ENCODE measurements at regions of chr1 and their contacts with region 1.

Region 1: GRCh38 chr1:1291548-1292441 is 11.6 kb downstream of the SCNN1D start:
- DNase-seq: peak; percentile 84
- ATAC-seq: peak; percentile 87
- H3K4me3 Mint-ChIP-seq: no peak overlapping the region
- H3K27ac Mint-ChIP-seq: no peak overlapping the region
- H3K4me1 Mint-ChIP-seq: peaks cover 2% of the 10 kb centered on the region
- H3K27me3 Mint-ChIP-seq: no peaks in the 10 kb centered on the region
- CTCF ChIP-seq: peak; percentile 69

Region 2: GRCh38 chr1:1115786-1116700 is 175.8 kb before region 1 on chr1 and contains the start of gene C1orf159:
- CTCF ChIA-PET with region 1: interaction called, 25 read pairs
- POLR2A ChIA-PET with region 1: interaction called, 3 read pairs
- intact Hi-C with region 1: no loop called
- DNase-seq: peak; percentile 99
- ATAC-seq: peak; percentile 94
- H3K4me3 Mint-ChIP-seq: peak within 1 kb of the TSS; percentile 76
- H3K27ac Mint-ChIP-seq: peak within 1 kb of the TSS; percentile 86
- H3K4me1 Mint-ChIP-seq: peaks cover 22% of the 10 kb centered on the region
- H3K27me3 Mint-ChIP-seq: peaks cover 7% of the 10 kb centered on the region
- CTCF ChIP-seq: no peak
- total RNA-seq, gene C1orf159: 17.5 to 20.3 TPM

Region 3: DNA sequence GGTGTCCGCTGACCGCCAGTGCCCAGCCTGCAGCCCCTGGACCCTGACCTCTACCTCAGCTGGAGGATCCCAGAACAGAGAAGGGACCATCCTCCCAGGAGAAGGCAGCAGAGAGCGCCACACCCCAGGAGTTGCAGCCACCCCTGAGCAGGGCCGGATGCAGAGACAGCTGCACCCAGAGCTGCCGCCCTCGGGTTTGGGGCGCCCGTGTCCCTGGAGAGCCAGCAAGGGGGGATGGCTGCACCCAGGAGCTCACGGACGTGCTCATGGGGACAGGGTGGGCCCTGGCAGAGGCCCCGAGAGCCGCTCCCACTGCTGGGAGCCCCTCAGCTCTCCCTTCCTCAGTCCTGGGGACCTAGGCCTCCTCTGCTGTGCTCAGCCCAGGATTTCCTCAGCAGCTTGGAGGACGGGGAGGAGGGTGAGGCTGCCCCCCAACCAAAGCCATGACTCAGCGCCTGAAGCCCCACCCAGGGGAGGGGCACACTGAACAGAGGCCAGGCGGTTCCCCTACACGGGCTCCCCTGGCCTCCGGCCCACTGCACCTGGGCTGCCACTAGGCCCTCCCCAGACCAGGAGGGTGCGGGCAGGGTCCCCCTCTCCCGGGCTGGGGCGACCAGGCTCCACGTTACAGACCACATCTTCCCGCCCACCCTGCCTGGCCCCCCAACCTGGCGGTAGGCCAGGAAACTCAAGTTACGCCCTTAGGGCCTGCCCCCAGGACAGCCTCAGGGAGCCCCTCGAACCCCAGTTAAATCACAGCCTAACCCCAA is 13.7 kb after region 1 on chr1:
- CTCF ChIA-PET with region 1: interaction called, 15 read pairs
- POLR2A ChIA-PET with region 1: no interaction called
- intact Hi-C with region 1: no loop called
- DNase-seq: peak; percentile 90
- ATAC-seq: peak; percentile 62
- H3K4me3 Mint-ChIP-seq: peak overlapping the region; percentile 80
- H3K27ac Mint-ChIP-seq: peak overlapping the region; percentile 81
- H3K4me1 Mint-ChIP-seq: peaks cover 25% of the 10 kb centered on the region
- H3K27me3 Mint-ChIP-seq: no peaks in the 10 kb centered on the region
- CTCF ChIP-seq: no peak

Region 4: GRCh38 chr1:1441002-1441888 is 149.4 kb after region 1 on chr1:
- CTCF ChIA-PET with region 1: no interaction called
- POLR2A ChIA-PET with region 1: no interaction called
- intact Hi-C with region 1: no loop called
- DNase-seq: peak; percentile 65
- ATAC-seq: peak; percentile 94
- H3K4me3 Mint-ChIP-seq: no peak overlapping the region
- H3K27ac Mint-ChIP-seq: no peak overlapping the region
- H3K4me1 Mint-ChIP-seq: peaks cover 6% of the 10 kb centered on the region
- H3K27me3 Mint-ChIP-seq: peaks cover 12% of the 10 kb centered on the region
- CTCF ChIP-seq: peak; percentile 90